ENCODE measurements at regions of chr12 and their contacts with region 1.

Region 1: DNA sequence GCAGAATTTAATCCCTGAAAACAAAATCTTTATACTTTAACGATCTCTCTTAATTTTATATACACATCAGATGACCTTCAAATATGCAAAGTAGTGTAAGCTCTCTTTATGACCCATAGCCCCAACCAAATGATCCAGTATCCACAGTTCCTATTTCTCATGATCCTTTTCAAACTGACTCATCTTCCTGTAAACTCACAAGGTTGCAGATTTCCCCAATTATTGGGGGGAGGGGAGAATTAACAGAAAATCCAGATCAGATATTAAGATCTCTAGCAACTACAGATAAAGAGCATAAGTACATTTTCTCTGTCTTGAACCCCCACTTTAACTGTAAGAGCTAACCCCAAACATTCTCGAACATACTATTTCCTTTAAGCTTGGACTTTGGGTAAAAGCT is 12.5 kb downstream of the GNS start:
- DNase-seq: peak; percentile 70
- H3K4me3 ChIP-seq: no peak overlapping the region
- H3K27ac ChIP-seq: peak overlapping the region; percentile 79
- H3K4me1 ChIP-seq: peaks cover 41% of the 10 kb centered on the region
- H3K27me3 ChIP-seq: no peaks in the 10 kb centered on the region
- CTCF ChIP-seq: no peak
- POLR2A ChIP-seq: no peak

Region 2: DNA sequence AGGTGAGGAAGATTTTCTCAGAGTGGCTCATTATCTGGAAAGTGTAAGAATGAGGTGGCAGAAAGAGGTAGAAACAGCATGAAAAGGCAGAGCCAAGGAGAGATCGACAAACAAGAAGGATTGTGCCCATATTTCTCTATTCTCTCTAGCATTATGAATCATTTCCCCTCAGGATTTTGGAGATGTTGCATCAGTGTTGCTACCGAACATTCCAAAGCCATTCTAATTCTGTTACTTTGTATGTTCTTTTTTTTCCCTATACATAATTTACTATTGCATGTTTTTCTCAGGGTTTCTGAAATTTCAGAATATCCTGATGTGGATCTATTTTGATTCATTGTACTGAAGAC is 586.0 kb before region 1 on chr12:
- CTCF ChIA-PET with region 1: no interaction called
- POLR2A ChIA-PET with region 1: no interaction called
- dilution Hi-C with region 1: no loop called
- intact Hi-C with region 1: no loop called
- DNase-seq: peak; percentile 53
- H3K4me3 ChIP-seq: no peak overlapping the region
- H3K27ac ChIP-seq: peak overlapping the region; percentile 70
- H3K4me1 ChIP-seq: peaks cover 13% of the 10 kb centered on the region
- H3K27me3 ChIP-seq: no peaks in the 10 kb centered on the region
- CTCF ChIP-seq: no peak
- POLR2A ChIP-seq: no peak

Region 3: GRCh38 chr12:64445490-64445889 is 301.2 kb before region 1 on chr12:
- CTCF ChIA-PET with region 1: no interaction called
- POLR2A ChIA-PET with region 1: no interaction called
- dilution Hi-C with region 1: no loop called
- intact Hi-C with region 1: no loop called
- DNase-seq: no peak
- H3K4me3 ChIP-seq: no peak overlapping the region
- H3K27ac ChIP-seq: no peak overlapping the region
- H3K4me1 ChIP-seq: no peaks in the 10 kb centered on the region
- H3K27me3 ChIP-seq: no peaks in the 10 kb centered on the region
- CTCF ChIP-seq: no peak
- POLR2A ChIP-seq: no peak

Region 4: DNA sequence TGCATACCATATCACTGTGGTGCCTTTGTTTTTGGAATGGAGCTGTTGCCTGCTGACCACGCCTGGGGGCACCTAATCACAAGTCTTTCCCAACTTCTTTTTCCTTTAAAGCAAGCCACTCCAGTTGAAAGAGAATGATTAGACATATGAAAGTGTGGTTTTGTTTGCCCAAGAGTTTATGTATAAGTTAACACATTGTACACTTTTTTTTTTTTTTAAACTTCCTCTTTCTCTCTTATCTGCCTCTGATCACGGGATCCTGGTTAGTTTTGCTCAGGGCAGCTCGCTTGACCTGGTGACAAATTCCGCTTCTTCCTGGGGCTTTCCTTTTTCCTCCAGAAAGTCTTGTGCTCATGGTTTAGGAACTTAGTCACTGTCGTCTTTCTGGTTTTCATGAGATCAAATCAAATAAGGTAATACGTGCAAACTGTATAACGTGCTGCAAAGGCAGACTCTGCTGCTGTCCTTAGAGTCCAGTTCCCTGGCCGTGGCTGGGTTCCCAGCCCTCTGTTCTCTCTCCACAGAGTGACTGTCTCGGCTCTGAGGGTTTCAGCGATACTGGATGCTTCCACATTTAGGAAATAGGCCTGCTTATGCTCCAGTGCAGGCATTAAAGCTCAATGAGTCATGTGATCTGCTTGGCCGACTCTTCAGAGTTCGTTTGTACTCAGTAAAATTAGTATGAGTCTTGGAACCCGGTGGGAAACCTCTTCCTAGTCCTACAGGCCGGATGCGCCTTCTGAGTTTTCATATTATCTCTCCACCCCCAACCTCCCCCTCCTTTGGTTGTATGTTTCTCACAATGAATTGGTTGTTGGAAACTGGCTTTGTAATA is 121.2 kb before region 1 on chr12:
- CTCF ChIA-PET with region 1: no interaction called
- POLR2A ChIA-PET with region 1: no interaction called
- dilution Hi-C with region 1: no loop called
- intact Hi-C with region 1: loop called (anchors 1 kb)
- DNase-seq: peak; percentile 96
- H3K4me3 ChIP-seq: peak overlapping the region in 2 of 3 experiments; percentile 11 to 39
- H3K27ac ChIP-seq: peak overlapping the region; percentile 89
- H3K4me1 ChIP-seq: peaks cover 65% of the 10 kb centered on the region
- H3K27me3 ChIP-seq: no peaks in the 10 kb centered on the region
- CTCF ChIP-seq: no peak
- POLR2A ChIP-seq: peak; percentile 36

Region 5: GRCh38 chr12:64660237-64661018 is 86.2 kb before region 1 on chr12:
- CTCF ChIA-PET with region 1: no interaction called
- POLR2A ChIA-PET with region 1: no interaction called
- dilution Hi-C with region 1: no loop called
- intact Hi-C with region 1: no loop called
- DNase-seq: no peak
- H3K4me3 ChIP-seq: no peak overlapping the region
- H3K27ac ChIP-seq: no peak overlapping the region
- H3K4me1 ChIP-seq: peaks cover 18% of the 10 kb centered on the region
- H3K27me3 ChIP-seq: no peaks in the 10 kb centered on the region
- CTCF ChIP-seq: no peak
- POLR2A ChIP-seq: no peak